B cell (primary cell): ENCODE measurements at regions of chr2 and their contacts with region 1.

Region 1: DNA sequence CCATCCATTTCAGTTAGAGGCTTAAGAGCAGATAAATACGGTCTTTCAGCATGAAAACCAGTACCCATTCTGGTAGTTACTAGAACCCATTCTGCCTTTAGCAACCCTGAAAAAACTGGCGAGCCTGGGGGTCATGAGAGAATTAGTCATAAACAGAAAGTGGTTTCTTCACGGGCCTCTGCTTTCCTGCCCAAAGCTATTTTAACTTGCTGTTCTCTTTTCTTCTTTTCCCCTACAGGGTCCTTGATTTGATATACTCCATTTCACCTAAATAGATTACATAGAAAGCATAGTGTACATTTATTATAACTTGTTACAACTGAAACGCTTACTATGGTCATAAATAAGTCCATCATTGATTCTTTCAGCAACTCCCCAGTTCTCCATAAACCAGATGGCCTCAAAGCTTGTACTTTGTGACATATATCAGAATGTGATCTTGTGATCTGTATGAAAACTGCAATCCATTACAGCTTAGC is 48.3 kb downstream of the WDFY1 start:
- DNase-seq: peak; percentile 74
- ATAC-seq: peak; percentile 44
- H3K4me3 ChIP-seq: peak overlapping the region in 3 of 5 experiments; percentile 22 to 27 (median 25)
- H3K4me3 Mint-ChIP-seq: peak overlapping the region; percentile 86
- H3K27ac ChIP-seq: peak overlapping the region; percentile 90 to 91
- H3K27ac Mint-ChIP-seq: peak overlapping the region; percentile 93
- H3K4me1 ChIP-seq: peaks cover 56 to 57% of the 10 kb centered on the region in 2 donors
- H3K4me1 Mint-ChIP-seq: peaks cover 67% of the 10 kb centered on the region
- H3K27me3 ChIP-seq: no peaks in the 10 kb centered on the region
- H3K27me3 Mint-ChIP-seq: no peaks in the 10 kb centered on the region
- CTCF ChIP-seq: no peak

Region 2: GRCh38 chr2:223404616-223405015 is 492.3 kb before region 1 on chr2:
- CTCF ChIA-PET with region 1: no interaction called
- POLR2A ChIA-PET with region 1: no interaction called
- intact Hi-C with region 1: no loop called
- DNase-seq: no peak
- ATAC-seq: no peak
- H3K4me3 ChIP-seq: no peak overlapping the region
- H3K4me3 Mint-ChIP-seq: no peak overlapping the region
- H3K27ac ChIP-seq: no peak overlapping the region
- H3K27ac Mint-ChIP-seq: no peak overlapping the region
- H3K4me1 ChIP-seq: no peaks in the 10 kb centered on the region
- H3K4me1 Mint-ChIP-seq: no peaks in the 10 kb centered on the region
- H3K27me3 ChIP-seq: no peaks in the 10 kb centered on the region
- H3K27me3 Mint-ChIP-seq: no peaks in the 10 kb centered on the region
- CTCF ChIP-seq: no peak

Region 3: GRCh38 chr2:223779877-223780276 is 117.0 kb before region 1 on chr2:
- CTCF ChIA-PET with region 1: no interaction called
- POLR2A ChIA-PET with region 1: no interaction called
- intact Hi-C with region 1: loop called (anchors 10 kb)
- DNase-seq: peak; percentile 79
- ATAC-seq: peak; percentile 78
- H3K4me3 ChIP-seq: no peak overlapping the region
- H3K4me3 Mint-ChIP-seq: no peak overlapping the region
- H3K27ac ChIP-seq: no peak overlapping the region
- H3K27ac Mint-ChIP-seq: peak overlapping the region; percentile 37
- H3K4me1 ChIP-seq: no peaks in the 10 kb centered on the region
- H3K4me1 Mint-ChIP-seq: peaks cover 8% of the 10 kb centered on the region
- H3K27me3 ChIP-seq: no peaks in the 10 kb centered on the region
- H3K27me3 Mint-ChIP-seq: no peaks in the 10 kb centered on the region
- CTCF ChIP-seq: peak; percentile 67

Region 4: GRCh38 chr2:223884399-223884798 is 12.5 kb before region 1 on chr2:
- CTCF ChIA-PET with region 1: interaction called, 4 read pairs
- POLR2A ChIA-PET with region 1: interaction called, 5 read pairs
- intact Hi-C with region 1: loop called (anchors 2 kb)
- DNase-seq: no peak
- ATAC-seq: no peak
- H3K4me3 ChIP-seq: no peak overlapping the region
- H3K4me3 Mint-ChIP-seq: no peak overlapping the region
- H3K27ac ChIP-seq: no peak overlapping the region
- H3K27ac Mint-ChIP-seq: peak overlapping the region; percentile 32
- H3K4me1 ChIP-seq: peaks cover 0 to 4% of the 10 kb centered on the region in 2 donors
- H3K4me1 Mint-ChIP-seq: peaks cover 26% of the 10 kb centered on the region
- H3K27me3 ChIP-seq: no peaks in the 10 kb centered on the region
- H3K27me3 Mint-ChIP-seq: no peaks in the 10 kb centered on the region
- CTCF ChIP-seq: no peak

Region 5: GRCh38 chr2:223944703-223945531 is 48.0 kb after region 1 on chr2 and contains the start of gene WDFY1:
- CTCF ChIA-PET with region 1: interaction called, 7 read pairs
- POLR2A ChIA-PET with region 1: interaction called, 3 read pairs
- intact Hi-C with region 1: loop called (anchors 1 kb)
- DNase-seq: peak; percentile 87
- ATAC-seq: peak; percentile 93
- H3K4me3 ChIP-seq: peak within 1 kb of the TSS; percentile 58 to 92 (median 89)
- H3K4me3 Mint-ChIP-seq: peak within 1 kb of the TSS; percentile 94
- H3K27ac ChIP-seq: peak within 1 kb of the TSS; percentile 35 to 87
- H3K27ac Mint-ChIP-seq: peak within 1 kb of the TSS; percentile 94
- H3K4me1 ChIP-seq: peaks cover 21 to 44% of the 10 kb centered on the region in 2 donors
- H3K4me1 Mint-ChIP-seq: peaks cover 50% of the 10 kb centered on the region
- H3K27me3 ChIP-seq: no peaks in the 10 kb centered on the region
- H3K27me3 Mint-ChIP-seq: no peaks in the 10 kb centered on the region
- CTCF ChIP-seq: no peak
- total RNA-seq, gene WDFY1: 71.2 and 76.0 TPM in 2 replicates

Region 6: DNA sequence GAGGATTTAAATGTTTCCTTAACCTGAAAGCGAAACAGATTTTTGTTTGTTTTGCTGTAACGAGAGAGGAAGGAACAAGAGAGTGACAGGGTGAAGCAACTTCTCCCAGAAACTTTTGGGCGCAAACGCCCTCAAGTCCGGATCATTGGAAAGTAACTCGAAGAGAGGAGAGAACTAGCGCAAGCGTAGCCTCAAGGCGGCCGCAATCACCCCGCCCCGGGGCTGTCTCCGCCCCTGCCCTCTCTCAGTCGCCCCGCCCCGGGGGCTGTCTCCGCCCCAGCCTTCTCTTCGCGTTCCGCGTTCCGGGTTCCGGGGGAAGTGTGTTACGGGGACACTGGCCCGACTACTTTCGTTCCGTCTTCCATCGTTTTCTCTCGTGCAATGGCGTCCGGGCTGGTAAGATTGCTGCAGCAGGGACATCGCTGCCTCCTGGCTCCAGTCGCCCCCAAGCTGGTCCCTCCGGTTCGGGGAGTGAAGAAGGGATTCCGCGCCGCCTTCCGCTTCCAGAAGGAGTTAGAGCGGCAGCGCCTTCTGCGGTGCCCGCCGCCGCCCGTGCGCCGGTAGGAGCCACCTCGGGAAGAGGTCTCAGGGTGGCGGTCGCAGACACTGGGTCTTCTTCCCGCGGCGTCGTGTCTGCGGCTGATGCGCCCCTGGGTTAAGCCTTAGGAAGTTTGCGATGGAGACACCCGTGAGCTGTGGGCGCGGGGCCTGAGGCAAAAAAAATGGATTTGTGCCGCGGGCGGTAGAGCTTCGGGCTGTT is 60.4 kb after region 1 on chr2 and contains the start of gene MRPL44:
- CTCF ChIA-PET with region 1: interaction called, 9 read pairs
- POLR2A ChIA-PET with region 1: no interaction called
- intact Hi-C with region 1: loop called (anchors 1 kb)
- DNase-seq: peak; percentile 96
- ATAC-seq: peak; percentile 99
- H3K4me3 ChIP-seq: peak within 1 kb of the TSS; percentile 66 to 94 (median 86)
- H3K4me3 Mint-ChIP-seq: peak within 1 kb of the TSS; percentile 94
- H3K27ac ChIP-seq: peak within 1 kb of the TSS; percentile 72 to 78
- H3K27ac Mint-ChIP-seq: peak within 1 kb of the TSS; percentile 97
- H3K4me1 ChIP-seq: peaks cover 48 to 52% of the 10 kb centered on the region in 2 donors
- H3K4me1 Mint-ChIP-seq: peaks cover 67% of the 10 kb centered on the region
- H3K27me3 ChIP-seq: no peaks in the 10 kb centered on the region
- H3K27me3 Mint-ChIP-seq: no peaks in the 10 kb centered on the region
- CTCF ChIP-seq: no peak
- total RNA-seq, gene MRPL44: 23.4 and 26.7 TPM in 2 replicates

Region 7: DNA sequence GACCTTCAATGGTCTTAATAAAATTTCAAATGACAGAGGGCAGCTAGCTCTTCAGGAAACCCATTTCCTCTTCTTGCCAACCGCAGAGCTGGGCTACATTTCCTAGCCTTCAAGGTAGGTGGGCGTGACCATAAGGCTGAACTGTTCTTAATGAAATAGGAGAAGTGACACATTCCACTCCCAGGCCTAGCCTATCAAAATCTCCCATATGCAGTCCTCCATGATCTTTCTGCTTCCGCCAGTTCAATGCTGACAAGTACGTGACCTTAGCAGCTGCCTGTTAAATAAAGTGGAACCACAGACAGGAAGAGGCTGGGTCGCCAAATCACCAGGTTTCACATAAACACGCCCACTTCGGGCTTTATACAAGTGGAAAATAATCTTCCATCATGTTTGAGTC is 129.0 kb after region 1 on chr2:
- CTCF ChIA-PET with region 1: no interaction called
- POLR2A ChIA-PET with region 1: no interaction called
- intact Hi-C with region 1: loop called (anchors 5 kb)
- DNase-seq: peak; percentile 90
- ATAC-seq: peak; percentile 97
- H3K4me3 ChIP-seq: peak overlapping the region in 2 of 5 experiments; percentile 2 to 40
- H3K4me3 Mint-ChIP-seq: peak overlapping the region; percentile 57
- H3K27ac ChIP-seq: peak overlapping the region; percentile 43 to 44
- H3K27ac Mint-ChIP-seq: peak overlapping the region; percentile 74
- H3K4me1 ChIP-seq: peaks cover 36% of the 10 kb centered on the region in 2 donors
- H3K4me1 Mint-ChIP-seq: peaks cover 40% of the 10 kb centered on the region
- H3K27me3 ChIP-seq: no peaks in the 10 kb centered on the region
- H3K27me3 Mint-ChIP-seq: no peaks in the 10 kb centered on the region
- CTCF ChIP-seq: no peak

Region 8: DNA sequence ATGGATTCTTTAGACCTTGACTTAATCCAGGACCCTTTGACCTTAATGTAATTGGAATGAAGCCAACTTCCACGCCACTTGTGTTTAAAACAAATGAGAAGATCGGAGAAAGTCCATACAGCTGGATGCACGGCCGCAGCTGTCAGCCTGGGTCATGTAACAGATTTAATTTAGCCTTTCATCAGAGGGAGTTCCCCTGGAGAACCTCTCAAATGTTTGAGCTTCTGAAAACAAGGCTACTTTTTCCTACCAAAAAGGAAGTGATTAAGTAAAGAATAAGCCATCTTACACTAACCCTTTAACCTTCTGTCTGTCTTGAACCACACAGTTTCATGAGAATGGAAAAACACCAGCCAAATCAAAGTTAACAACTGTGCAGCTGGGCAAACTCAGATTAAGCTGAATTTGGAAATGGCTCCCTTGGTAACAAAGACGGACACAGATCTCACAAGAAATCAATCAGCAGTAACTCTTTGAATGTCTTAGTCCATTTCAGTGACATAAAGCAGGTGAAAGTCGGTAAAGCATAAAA is 1041.8 kb after region 1 on chr2:
- CTCF ChIA-PET with region 1: no interaction called
- POLR2A ChIA-PET with region 1: no interaction called
- intact Hi-C with region 1: loop called (anchors 5 kb)
- DNase-seq: peak; percentile 45
- ATAC-seq: peak; percentile 50
- H3K4me3 ChIP-seq: peak overlapping the region in 1 of 5 experiments; percentile 26
- H3K4me3 Mint-ChIP-seq: peak overlapping the region; percentile 70
- H3K27ac ChIP-seq: peak overlapping the region; percentile 60 to 80
- H3K27ac Mint-ChIP-seq: peak overlapping the region; percentile 91
- H3K4me1 ChIP-seq: peaks cover 52 to 61% of the 10 kb centered on the region in 2 donors
- H3K4me1 Mint-ChIP-seq: peaks cover 80% of the 10 kb centered on the region
- H3K27me3 ChIP-seq: no peaks in the 10 kb centered on the region
- H3K27me3 Mint-ChIP-seq: no peaks in the 10 kb centered on the region
- CTCF ChIP-seq: no peak